AG04450 (cell line): ENCODE measurements at regions of chr20 and their contacts with region 1.

Region 1: DNA sequence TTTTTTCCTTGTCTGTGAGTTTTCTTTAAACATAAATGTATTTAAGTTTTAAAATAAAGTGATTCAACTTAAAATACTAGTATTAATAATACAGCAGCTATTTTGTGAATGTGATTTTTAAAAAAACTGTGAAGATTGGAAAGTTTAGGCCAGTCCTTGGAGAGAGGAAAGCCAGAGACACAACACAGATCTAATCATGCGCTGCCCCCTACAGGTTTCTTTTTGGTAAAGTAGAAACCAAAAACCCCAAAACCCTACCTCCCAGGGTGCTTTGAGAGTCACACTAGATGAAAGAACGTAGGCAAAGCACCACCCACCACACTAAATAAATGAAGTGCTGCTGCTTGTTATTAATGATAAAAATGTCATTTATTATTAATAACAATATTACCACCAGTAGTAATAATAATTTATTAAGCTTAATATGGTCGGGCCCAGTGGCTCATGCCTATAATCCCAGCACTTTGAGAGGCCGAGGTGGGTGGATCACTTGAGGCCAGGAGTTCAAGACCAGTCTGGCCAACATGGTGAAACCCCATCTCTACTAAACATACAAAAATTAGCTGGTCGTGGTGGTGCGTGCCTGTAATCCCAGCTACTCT is 33.7 kb downstream of the SLC9A8 start:
- DNase-seq: no peak
- H3K4me3 ChIP-seq: no peak overlapping the region
- H3K27ac ChIP-seq: no peak overlapping the region
- H3K27me3 ChIP-seq: no peaks in the 10 kb centered on the region
- CTCF ChIP-seq: peak; percentile 65

Region 2: DNA sequence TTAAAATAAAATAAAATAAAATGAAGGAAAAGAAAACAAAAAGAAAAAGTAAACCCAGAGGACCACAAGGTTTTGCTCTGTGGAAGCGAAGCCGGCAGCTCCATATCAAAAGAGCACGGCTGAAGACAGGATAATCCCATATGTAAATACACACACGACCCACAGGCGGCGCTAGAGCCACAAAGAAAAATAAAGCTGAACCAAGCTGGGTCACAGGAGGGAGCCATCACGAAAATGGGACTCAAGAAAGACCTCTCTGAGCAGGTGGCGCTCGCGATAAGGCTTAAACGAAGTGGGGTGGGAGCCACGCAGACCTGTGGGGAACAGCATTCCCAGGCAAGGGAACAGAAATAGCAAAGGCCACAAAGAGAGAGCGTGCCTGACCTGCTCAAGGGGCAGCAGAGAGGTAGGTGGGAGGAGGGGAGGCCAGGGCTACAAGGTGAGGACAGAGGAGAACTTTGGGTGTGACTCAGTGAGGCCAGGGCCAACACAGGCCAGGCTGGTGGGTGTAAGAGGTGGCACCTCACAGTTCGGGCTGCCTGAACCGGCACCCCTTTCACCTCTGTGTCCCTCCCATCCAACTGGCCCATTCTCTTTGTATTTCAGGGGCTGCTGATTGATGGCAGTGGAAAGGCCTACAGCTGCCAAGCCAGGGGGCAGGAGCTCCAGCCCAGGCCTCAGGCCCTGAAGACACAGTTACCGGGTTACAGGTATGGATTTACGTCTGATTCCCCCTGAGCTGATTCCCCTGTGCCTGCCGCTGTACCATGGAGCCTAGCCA is 304.4 kb before region 1 on chr20:
- CTCF ChIA-PET with region 1: interaction called, 45 read pairs
- POLR2A ChIA-PET with region 1: no interaction called
- DNase-seq: peak; percentile 39
- H3K4me3 ChIP-seq: no peak overlapping the region
- H3K27ac ChIP-seq: no peak overlapping the region
- H3K27me3 ChIP-seq: peaks cover 5% of the 10 kb centered on the region
- CTCF ChIP-seq: peak; percentile 75

Region 3: GRCh38 chr20:49635166-49635565 is 211.1 kb before region 1 on chr20:
- CTCF ChIA-PET with region 1: interaction called, 11 read pairs
- POLR2A ChIA-PET with region 1: no interaction called
- DNase-seq: no peak
- H3K4me3 ChIP-seq: no peak overlapping the region
- H3K27ac ChIP-seq: no peak overlapping the region
- H3K27me3 ChIP-seq: no peaks in the 10 kb centered on the region
- CTCF ChIP-seq: no peak

Region 4: DNA sequence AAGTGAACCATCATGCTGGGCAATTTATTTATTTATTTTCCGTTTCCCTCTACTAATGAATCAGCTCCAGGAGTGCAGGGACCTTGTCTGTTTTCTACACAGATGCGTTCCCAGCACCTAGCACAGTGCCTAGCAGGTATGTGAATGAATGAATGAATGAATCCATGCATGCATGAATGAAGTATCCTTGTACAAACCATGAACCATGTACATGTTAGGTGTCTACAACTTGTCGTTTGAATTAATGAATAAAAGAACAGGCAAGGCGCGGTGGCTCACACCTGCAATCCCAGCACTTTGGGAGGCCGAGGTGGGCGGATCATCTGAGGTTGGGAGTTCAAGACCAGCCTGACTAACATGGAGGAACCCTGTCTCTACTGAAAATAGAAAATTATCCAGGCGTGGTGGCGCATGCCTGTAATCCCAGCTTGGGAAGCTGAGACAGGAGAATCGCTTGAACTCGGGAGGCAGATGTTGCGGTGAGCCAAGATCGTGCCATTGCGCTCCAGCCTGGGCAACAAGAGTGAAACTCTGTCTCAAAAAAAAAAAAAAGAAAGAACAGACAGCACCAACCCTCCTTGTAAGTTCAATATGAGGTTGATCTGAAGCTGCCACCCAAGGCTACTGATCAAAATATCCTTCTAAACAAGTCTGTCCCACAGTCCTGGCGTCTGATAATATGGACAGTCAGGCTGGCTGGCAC is 61.0 kb before region 1 on chr20:
- CTCF ChIA-PET with region 1: interaction called, 11 read pairs
- POLR2A ChIA-PET with region 1: no interaction called
- DNase-seq: no peak
- H3K4me3 ChIP-seq: no peak overlapping the region
- H3K27ac ChIP-seq: no peak overlapping the region
- H3K27me3 ChIP-seq: no peaks in the 10 kb centered on the region
- CTCF ChIP-seq: no peak

Region 5: GRCh38 chr20:49804364-49804763 is 41.9 kb before region 1 on chr20:
- CTCF ChIA-PET with region 1: no interaction called
- POLR2A ChIA-PET with region 1: no interaction called
- DNase-seq: no peak
- H3K4me3 ChIP-seq: no peak overlapping the region
- H3K27ac ChIP-seq: no peak overlapping the region
- H3K27me3 ChIP-seq: peaks cover 2% of the 10 kb centered on the region
- CTCF ChIP-seq: no peak

Region 6: DNA sequence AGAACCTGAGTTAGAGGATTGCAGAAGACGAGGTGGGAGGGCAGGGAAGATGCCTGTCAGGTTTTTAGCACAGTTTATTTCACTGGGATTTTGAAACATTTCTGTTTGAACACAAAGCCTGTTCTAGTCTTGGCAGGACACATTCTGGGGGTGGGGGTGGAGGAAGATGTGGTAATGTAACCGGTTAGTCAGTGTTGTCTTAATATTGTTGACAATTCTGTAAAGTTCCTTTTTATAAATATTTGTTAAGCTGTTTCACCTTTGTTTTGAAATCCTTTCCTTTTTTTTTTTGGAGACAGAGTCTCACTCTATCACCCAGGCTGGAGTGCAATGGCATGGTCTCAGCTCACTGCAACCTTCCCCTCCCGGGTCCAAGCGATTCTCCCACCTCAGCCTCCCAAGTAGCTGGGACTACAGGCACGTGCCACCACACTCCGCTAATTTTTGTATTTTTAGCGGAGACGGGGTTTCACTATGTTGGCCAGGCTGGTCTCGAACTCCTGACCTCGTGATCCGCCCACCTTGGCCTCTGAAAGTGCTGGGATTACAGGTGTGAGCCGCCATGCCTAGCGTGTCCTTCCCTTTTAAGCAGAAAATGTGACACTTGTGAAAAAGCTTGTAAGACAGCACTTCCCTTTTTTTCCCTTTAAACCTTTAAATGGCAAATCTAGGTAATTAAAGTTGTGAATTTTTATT is 13.5 kb before region 1 on chr20:
- CTCF ChIA-PET with region 1: interaction called, 29 read pairs
- POLR2A ChIA-PET with region 1: no interaction called
- DNase-seq: no peak
- H3K4me3 ChIP-seq: no peak overlapping the region
- H3K27ac ChIP-seq: peak overlapping the region; percentile 39
- H3K27me3 ChIP-seq: no peaks in the 10 kb centered on the region
- CTCF ChIP-seq: no peak

Region 7: DNA sequence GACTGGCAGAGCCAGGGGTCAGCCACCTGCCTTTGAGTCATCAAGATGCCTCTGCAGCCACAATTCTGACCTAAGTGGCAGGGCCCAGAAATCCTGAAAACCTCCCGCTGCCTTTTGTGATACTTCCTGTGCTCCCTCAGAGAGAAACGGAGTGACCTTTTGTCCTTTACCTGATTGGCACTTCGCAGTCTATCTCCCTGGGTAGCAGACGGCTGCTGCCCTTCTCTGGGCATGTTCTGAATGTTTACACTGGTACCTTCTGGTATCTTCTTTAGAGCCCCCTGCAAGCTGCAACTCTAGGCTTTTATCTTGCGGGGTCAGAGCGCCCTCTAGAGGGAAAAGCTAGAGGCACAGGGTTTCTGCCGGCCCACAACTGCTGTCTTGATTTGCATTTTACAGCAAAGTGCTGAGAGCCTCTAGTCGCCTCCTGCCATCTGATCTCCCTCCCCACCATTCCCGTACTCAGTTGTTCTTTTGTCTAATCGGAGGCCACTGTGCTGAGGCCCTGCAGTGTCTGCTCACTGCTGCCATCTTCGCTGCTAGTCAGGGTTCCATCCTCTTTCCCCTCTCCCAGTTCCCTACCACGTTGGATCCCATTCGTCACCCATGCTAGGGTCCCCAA is 42.1 kb after region 1 on chr20:
- CTCF ChIA-PET with region 1: interaction called, 12 read pairs
- POLR2A ChIA-PET with region 1: no interaction called
- DNase-seq: no peak
- H3K4me3 ChIP-seq: no peak overlapping the region
- H3K27ac ChIP-seq: no peak overlapping the region
- H3K27me3 ChIP-seq: no peaks in the 10 kb centered on the region
- CTCF ChIP-seq: peak; percentile 84